ENCODE measurements at regions of chr16 and their contacts with region 1.

Region 1: DNA sequence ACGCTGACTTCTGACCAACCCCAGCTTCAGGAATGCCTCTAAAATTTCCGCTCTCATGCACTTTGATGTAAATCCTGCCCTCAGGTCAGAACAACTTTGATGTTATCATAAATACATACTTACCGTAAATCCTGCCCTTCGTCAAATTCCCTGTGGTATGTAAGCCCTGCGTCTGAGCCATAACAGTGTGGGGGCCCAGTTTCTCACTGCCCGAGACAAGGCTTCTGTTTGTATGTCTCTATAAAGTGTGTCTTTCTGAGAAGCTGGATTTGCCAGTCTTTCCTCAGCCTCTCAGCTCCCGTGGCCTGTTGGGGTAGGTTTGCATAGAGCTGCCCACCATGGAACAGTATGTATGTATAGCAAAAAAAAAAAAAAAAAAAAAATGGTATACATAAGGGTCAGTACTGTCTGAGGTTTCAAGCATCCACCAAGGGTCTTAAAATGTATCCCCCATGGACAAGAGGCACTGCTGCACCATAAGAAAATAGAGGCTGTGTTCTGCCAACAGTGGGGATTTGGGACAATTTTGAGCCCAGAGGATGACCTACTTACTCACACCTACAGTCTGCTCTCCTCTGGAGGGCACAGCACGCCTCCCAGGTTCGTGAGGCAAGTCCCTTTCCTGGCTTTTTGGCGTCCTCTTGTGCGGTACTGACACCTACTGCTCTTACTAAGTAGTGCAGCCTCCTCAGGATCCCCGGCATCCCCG is 17.5 kb downstream of the PRMT7 start:
- DNase-seq: peak; percentile 25 to 87
- H3K4me3 ChIP-seq: no peak overlapping the region
- H3K27ac ChIP-seq: no peak overlapping the region
- H3K4me1 ChIP-seq: no peaks in the 10 kb centered on the region
- H3K27me3 ChIP-seq: no peaks in the 10 kb centered on the region
- CTCF ChIP-seq: peak; percentile 93 to 96 (median 94)

Region 2: GRCh38 chr16:68085259-68086071 is 242.8 kb before region 1 on chr16 and contains the start of gene NFATC3:
- intact Hi-C with region 1: loop called (anchors 10 kb)
- DNase-seq: peak; percentile 94 to 99
- H3K4me3 ChIP-seq: peak within 1 kb of the TSS; percentile 90 to 96
- H3K27ac ChIP-seq: peak within 1 kb of the TSS; percentile 98 to 99
- H3K4me1 ChIP-seq: peaks cover 11 to 21% of the 10 kb centered on the region in 2 donors
- H3K27me3 ChIP-seq: no peaks in the 10 kb centered on the region
- CTCF ChIP-seq: no peak
- total RNA-seq, gene NFATC3: 36.4 TPM

Region 3: DNA sequence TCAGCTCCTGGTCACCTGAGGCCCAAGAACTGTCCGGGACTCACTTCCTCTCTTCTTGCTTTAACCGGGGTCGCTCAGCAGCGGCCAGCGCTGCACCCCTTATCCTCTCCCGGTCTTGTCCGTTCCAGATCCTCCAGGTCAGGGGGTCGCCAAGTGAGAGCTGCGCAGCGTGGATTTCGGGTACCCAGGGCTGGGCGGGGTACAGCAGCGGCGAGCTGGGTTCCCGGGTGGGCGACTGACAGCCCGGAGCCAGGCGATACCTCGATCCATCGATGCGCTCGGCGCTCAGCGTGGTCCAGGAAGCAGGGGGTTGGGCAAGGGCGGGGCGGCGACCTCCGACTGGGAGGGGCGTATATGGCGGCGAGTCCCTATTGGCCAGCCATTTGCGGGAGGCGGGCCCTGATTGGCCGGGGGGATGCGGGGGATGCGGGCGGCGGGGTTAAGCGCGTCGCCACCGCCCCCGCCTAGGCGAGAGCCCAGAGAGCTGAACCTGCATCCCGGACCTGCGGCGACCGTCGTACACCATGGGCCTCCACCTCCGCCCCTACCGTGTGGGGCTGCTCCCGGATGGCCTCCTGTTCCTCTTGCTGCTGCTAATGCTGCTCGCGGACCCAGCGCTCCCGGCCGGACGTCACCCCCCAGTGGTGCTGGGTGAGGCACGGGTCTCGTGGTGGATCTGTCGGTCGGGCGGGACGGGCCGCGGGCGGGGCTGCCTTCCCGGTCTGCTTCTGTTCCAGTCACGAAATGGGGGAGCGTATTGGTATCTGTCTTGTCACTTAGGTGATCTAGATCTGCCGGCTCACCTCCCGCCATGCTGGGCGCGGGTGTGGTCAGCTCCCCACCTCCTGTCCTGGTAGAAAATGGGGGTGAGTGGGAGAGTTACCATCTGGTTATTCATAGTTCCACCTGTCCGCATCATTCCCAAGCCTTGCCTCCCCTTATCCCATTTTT is 83.1 kb before region 1 on chr16 and contains the start of gene PLA2G15:
- intact Hi-C with region 1: loop called (anchors 1 kb)
- DNase-seq: peak; percentile 72 to 97
- H3K4me3 ChIP-seq: peak within 1 kb of the TSS; percentile 67 to 92
- H3K27ac ChIP-seq: peak within 1 kb of the TSS; percentile 6 to 75
- H3K4me1 ChIP-seq: peaks cover 24 to 34% of the 10 kb centered on the region in 2 donors
- H3K27me3 ChIP-seq: no peaks in the 10 kb centered on the region
- CTCF ChIP-seq: no peak
- total RNA-seq, gene PLA2G15: 21.9 TPM

Region 4: GRCh38 chr16:68264128-68265077 is 63.9 kb before region 1 on chr16 and contains the start of gene SLC7A6:
- intact Hi-C with region 1: loop called (anchors 1 kb)
- DNase-seq: peak; percentile 40 to 87
- H3K4me3 ChIP-seq: peak within 1 kb of the TSS; percentile 76 to 90
- H3K27ac ChIP-seq: peak within 1 kb of the TSS; percentile 97 to 99
- H3K4me1 ChIP-seq: peaks cover 0 to 22% of the 10 kb centered on the region in 2 donors
- H3K27me3 ChIP-seq: no peaks in the 10 kb centered on the region
- CTCF ChIP-seq: peak; percentile 62 to 80 (median 76)
- total RNA-seq, gene SLC7A6: 27.7 TPM

Region 5: DNA sequence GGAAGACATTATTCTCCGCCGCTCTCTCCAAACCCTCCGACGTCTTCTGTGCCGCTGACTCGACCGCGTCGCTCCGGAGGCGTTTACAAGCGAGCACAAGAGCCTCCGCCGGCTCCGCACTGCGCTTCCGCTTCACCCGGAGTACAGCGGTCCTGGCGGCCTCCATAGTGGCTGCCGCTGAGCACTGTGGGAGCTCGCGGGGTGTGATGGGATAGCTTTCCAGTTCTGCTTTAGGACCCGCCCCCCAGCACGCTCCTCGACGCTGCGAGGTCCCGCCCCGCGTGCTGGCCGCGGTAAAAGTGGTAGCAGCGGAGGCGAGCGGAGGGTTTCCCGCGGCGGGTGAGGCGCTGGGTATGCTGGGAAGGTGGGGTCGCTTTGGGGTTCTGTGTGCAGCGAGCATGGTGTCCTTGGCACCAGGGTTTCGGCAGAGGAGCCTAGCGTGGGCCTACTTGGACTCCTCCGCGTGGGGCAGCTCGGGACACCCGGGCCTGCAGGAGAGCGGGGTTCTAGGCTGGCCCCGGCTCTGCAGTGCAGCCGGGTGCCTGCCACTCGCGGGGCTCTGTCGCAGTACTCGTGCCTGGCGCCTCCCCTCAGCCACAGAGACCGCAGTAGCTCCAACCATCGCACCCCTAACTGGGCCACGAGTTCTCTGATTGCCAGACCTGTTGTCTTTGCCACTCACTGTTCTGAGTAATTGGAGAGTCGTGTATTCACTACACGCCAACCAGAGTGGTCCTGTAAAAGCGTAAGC is 17.4 kb before region 1 on chr16 and contains the starts of genes PRMT7 and SLC7A6OS:
- intact Hi-C with region 1: loop called (anchors 2 kb)
- DNase-seq: peak; percentile 68 to 93
- H3K4me3 ChIP-seq: peak within 1 kb of the TSS; percentile 87 to 88
- H3K27ac ChIP-seq: peak within 1 kb of the TSS; percentile 58 to 68
- H3K4me1 ChIP-seq: peaks cover 7 to 17% of the 10 kb centered on the region in 2 donors
- H3K27me3 ChIP-seq: no peaks in the 10 kb centered on the region
- CTCF ChIP-seq: peak in 2 of 3 experiments; percentile 20 to 53
- total RNA-seq, gene PRMT7: 25.1 TPM
- total RNA-seq, gene SLC7A6OS: 14.4 TPM

Measured in ascending aorta (tissue), 2 donors.